ENCODE measurements at regions of chr14 and their contacts with region 1.

Region 1: DNA sequence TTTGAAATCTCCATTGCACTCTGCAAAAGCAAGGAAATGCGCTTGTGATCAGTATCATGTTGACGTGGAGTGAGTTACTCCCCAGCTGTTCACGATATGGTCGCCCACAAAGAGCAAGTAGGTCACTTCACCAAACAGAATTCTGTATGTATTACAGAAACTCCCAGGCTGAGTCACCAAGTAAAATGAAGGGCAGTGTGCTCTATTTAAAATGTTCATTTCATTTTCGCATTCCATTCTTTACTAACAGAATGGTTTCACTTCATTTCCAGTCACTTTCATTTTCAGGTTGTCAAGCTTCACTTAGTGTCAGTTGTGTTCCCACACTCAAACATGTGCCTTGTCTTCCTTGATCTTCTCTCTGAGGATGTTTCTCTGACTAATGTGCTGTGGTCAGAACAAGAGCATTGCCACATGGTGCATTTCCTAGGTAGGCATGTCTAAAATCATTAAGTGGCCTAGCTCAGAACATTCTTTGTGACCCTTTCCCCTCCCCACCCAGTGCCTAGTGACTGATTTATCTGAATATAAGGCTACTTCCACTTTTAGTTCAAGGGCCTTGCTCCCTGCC is 391.2 kb downstream of the RAD51B start:
- DNase-seq: peak; percentile 66
- H3K4me3 Mint-ChIP-seq: peak overlapping the region; percentile 56
- H3K27ac Mint-ChIP-seq: peak overlapping the region; percentile 64
- H3K4me1 Mint-ChIP-seq: peaks cover 47% of the 10 kb centered on the region
- H3K27me3 Mint-ChIP-seq: no peaks in the 10 kb centered on the region

Region 2: DNA sequence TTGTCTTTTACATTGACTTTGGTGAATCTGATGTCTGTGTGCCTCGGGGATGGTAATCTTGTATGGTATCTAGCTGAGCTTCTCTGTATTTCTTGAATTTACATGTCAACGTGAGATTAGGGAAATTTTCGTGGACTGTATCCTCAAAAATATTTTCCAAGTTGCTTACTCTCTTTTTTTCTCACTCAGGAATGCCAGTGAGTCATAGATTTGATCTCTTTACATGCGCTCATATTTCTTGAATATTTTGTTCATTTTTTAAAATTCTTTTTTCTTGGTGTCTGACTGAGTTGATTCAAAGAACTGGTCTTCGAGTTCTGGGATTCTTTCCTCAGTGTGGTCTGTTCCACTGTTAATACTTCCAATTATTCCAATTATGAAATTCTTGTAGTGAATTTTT is 183.5 kb before region 1 on chr14:
- CTCF ChIA-PET with region 1: no interaction called
- POLR2A ChIA-PET with region 1: no interaction called
- intact Hi-C with region 1: no loop called
- DNase-seq: no peak
- H3K4me3 Mint-ChIP-seq: no peak overlapping the region
- H3K27ac Mint-ChIP-seq: no peak overlapping the region
- H3K4me1 Mint-ChIP-seq: no peaks in the 10 kb centered on the region
- H3K27me3 Mint-ChIP-seq: no peaks in the 10 kb centered on the region

Region 3: DNA sequence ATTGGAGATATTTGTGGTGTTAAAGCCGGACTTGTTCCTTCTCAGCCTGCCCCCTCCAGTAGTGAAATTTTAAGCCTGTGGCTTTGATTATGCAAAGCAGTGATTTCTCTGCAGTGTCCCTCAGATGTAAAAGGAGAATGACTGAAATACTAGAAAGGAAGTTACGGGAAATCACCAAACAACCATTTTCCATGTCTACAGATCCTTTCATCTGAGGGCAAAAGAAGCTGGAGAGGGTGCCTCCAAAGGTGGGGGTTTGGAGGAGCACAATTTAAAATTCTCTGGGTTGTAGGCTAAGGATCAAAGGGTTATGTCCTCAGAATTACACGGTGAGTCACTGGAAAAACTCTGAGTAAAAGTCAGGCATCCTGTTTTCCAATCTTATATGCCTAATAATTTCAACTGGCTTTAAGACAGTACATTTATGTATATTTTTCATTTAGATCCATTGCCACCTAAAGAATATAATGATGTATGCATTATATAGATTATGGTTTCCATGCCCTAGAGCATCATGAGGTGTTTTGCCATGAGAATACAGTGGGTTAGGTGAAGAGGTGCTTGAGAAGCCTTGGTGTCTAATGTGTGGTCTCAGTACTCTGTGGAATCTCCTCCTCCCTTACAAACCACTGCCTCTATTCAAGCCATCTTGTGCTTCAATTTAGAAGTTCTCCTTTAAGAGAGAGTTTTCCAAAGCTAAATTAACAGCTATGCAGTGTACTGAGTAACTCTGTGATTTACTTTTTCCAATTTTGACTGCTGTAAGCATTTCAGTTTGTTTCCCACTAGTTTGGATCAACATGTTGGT is 29.1 kb before region 1 on chr14:
- CTCF ChIA-PET with region 1: no interaction called
- POLR2A ChIA-PET with region 1: interaction called, 3 read pairs
- intact Hi-C with region 1: loop called (anchors 1 kb)
- DNase-seq: no peak
- H3K4me3 Mint-ChIP-seq: no peak overlapping the region
- H3K27ac Mint-ChIP-seq: no peak overlapping the region
- H3K4me1 Mint-ChIP-seq: peaks cover 27% of the 10 kb centered on the region
- H3K27me3 Mint-ChIP-seq: no peaks in the 10 kb centered on the region

Region 4: GRCh38 chr14:68232300-68233055 is 21.7 kb after region 1 on chr14:
- CTCF ChIA-PET with region 1: interaction called, 4 read pairs
- POLR2A ChIA-PET with region 1: interaction called, 9 read pairs
- intact Hi-C with region 1: loop called (anchors 1 kb)
- DNase-seq: peak; percentile 64
- H3K4me3 Mint-ChIP-seq: no peak overlapping the region
- H3K27ac Mint-ChIP-seq: no peak overlapping the region
- H3K4me1 Mint-ChIP-seq: peaks cover 22% of the 10 kb centered on the region
- H3K27me3 Mint-ChIP-seq: no peaks in the 10 kb centered on the region

Region 5: GRCh38 chr14:68312884-68313610 is 102.2 kb after region 1 on chr14:
- CTCF ChIA-PET with region 1: no interaction called
- POLR2A ChIA-PET with region 1: no interaction called
- intact Hi-C with region 1: loop called (anchors 1 kb)
- DNase-seq: peak; percentile 75
- H3K4me3 Mint-ChIP-seq: no peak overlapping the region
- H3K27ac Mint-ChIP-seq: no peak overlapping the region
- H3K4me1 Mint-ChIP-seq: peaks cover 32% of the 10 kb centered on the region
- H3K27me3 Mint-ChIP-seq: peaks cover 3% of the 10 kb centered on the region

Region 6: GRCh38 chr14:68369281-68370056 is 158.7 kb after region 1 on chr14:
- CTCF ChIA-PET with region 1: no interaction called
- POLR2A ChIA-PET with region 1: no interaction called
- intact Hi-C with region 1: loop called (anchors 2 kb)
- DNase-seq: no peak
- H3K4me3 Mint-ChIP-seq: peak overlapping the region; percentile 33
- H3K27ac Mint-ChIP-seq: peak overlapping the region; percentile 9
- H3K4me1 Mint-ChIP-seq: peaks cover 32% of the 10 kb centered on the region
- H3K27me3 Mint-ChIP-seq: no peaks in the 10 kb centered on the region

Region 7: GRCh38 chr14:68795597-68796417 is 585.0 kb after region 1 on chr14:
- CTCF ChIA-PET with region 1: no interaction called
- POLR2A ChIA-PET with region 1: no interaction called
- intact Hi-C with region 1: loop called (anchors 2 kb)
- DNase-seq: peak; percentile 87
- H3K4me3 Mint-ChIP-seq: peak overlapping the region; percentile 89
- H3K27ac Mint-ChIP-seq: peak overlapping the region; percentile 99
- H3K4me1 Mint-ChIP-seq: peaks cover 48% of the 10 kb centered on the region
- H3K27me3 Mint-ChIP-seq: no peaks in the 10 kb centered on the region